Heart right ventricle (tissue), 16 donors: ENCODE measurements at regions of chr16 and their contacts with region 1.

Region 1: DNA sequence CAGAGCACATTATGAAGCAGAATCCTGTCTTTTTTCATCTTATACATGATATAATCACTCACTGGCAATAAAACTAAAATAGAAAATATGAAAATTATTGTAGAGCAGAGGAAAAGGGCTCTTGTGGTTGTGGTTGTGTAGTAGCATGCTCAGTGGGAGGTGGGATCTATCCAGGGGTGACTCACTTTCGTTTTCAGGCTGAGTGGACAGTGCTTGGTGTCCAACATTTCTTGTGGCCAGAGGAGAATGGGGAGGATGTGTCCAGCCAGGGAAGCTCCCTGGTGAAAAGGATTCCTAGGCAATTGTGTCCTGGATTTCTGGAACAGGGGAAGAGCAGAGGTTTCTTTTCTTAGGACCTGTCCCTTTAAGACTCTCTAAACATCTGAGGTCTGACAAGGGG is 31.9 kb upstream of the CPHXL start:
- DNase-seq: no peak
- ATAC-seq: no peak
- H3K4me3 ChIP-seq: no peak overlapping the region
- H3K27ac ChIP-seq: no peak overlapping the region
- H3K4me1 ChIP-seq: peaks cover 0 to 4% (median 0%) of the 10 kb centered on the region in 9 donors
- H3K27me3 ChIP-seq: no peaks in the 10 kb centered on the region
- CTCF ChIP-seq: no peak

Region 2: GRCh38 chr16:75647492-75648264 is 110.5 kb before region 1 on chr16 and contains the starts of genes KARS1 and TERF2IP:
- intact Hi-C with region 1: loop called in 5 of 10 experiments (anchors 5 to 10 kb)
- DNase-seq: peak; percentile 92 to 93
- ATAC-seq: peak; percentile 97 to 98 (median 98)
- H3K4me3 ChIP-seq: peak within 1 kb of the TSS; percentile 62 to 100 (median 96)
- H3K27ac ChIP-seq: peak within 1 kb of the TSS; percentile 90 to 99 (median 98)
- H3K4me1 ChIP-seq: peaks cover 0 to 65% (median 60%) of the 10 kb centered on the region in 9 donors
- H3K27me3 ChIP-seq: no peaks in the 10 kb centered on the region
- CTCF ChIP-seq: no peak
- total RNA-seq, gene KARS1: 123 to 145 (median 129) TPM
- total RNA-seq, gene TERF2IP: 49.1 to 79.3 (median 64.5) TPM

Region 3: DNA sequence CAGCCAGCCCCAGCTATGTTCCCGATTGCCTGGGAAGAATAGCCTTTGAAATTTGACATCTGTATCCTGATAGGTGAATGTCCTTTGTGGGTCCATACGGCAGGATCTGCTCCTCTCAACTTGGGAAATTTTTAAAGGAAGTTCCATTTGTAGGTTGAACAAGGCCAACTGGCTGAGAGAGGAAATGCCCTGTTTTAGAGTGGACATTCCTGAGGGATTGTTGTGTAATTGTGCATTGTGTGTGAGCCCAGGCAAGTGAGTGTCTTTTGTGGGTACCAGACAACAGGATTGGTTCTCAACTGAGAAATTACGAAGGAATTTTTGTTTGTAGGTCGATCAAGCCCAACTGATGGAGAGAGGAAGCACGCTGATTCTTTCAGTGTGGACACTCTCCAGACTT is 78.8 kb before region 1 on chr16:
- intact Hi-C with region 1: loop called in 1 of 10 experiments (anchors 10 kb)
- DNase-seq: no peak
- ATAC-seq: peak in 1 of 8 donors; percentile 42
- H3K4me3 ChIP-seq: no peak overlapping the region
- H3K27ac ChIP-seq: peak overlapping the region in 5 of 10 donors; percentile 6 to 48 (median 21)
- H3K4me1 ChIP-seq: peaks cover 0 to 11% (median 0%) of the 10 kb centered on the region in 9 donors
- H3K27me3 ChIP-seq: no peaks in the 10 kb centered on the region
- CTCF ChIP-seq: no peak

Region 4: DNA sequence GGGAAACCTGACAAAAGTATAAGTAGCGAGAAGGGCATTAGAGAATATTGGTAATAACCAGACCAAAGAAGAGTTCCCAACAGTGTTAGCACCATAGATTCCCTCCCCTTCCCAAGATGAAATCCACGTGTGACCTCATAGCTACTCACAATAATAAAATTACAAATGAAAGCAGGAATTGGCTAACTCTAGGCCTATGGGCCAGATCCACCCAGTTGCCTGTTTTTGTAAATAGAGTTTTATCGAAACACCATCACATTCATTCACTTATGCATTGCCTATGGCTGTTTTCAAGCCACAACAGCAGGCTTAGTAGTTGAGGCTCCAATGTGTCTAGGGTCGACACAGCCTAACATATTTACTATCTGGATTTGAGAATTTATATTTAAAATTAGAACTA is 39.8 kb before region 1 on chr16:
- intact Hi-C with region 1: no loop called
- DNase-seq: no peak
- ATAC-seq: no peak
- H3K4me3 ChIP-seq: no peak overlapping the region
- H3K27ac ChIP-seq: no peak overlapping the region
- H3K4me1 ChIP-seq: no peaks in the 10 kb centered on the region
- H3K27me3 ChIP-seq: no peaks in the 10 kb centered on the region
- CTCF ChIP-seq: no peak

Region 5: GRCh38 chr16:75801307-75801706 is 43.1 kb after region 1 on chr16:
- intact Hi-C with region 1: no loop called
- DNase-seq: no peak
- ATAC-seq: no peak
- H3K4me3 ChIP-seq: no peak overlapping the region
- H3K27ac ChIP-seq: no peak overlapping the region
- H3K4me1 ChIP-seq: no peaks in the 10 kb centered on the region
- H3K27me3 ChIP-seq: peaks cover 0 to 7% (median 0%) of the 10 kb centered on the region in 7 donors
- CTCF ChIP-seq: no peak